Tibial artery (tissue), 4 donors: ENCODE measurements at regions of chr2 and their contacts with region 1.

Region 1: DNA sequence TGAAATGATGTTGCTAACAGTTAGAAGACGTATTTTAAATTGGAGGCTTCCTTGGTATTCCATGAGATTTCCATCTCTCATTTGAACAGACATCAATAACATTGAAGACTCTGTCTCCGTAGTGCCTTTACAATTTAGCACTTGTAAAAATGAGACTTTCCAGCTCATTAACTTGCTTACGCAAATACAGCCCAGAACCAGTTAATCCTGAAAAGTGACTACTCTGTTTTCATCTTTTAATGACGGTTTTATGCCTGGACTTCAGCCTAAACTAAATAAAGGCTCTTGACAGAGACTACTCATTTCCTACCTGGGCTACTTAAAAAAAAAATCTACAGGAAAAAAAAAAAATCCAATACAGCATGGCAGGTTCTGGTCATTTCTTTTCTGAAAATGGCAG is 148.6 kb downstream of the LRATD1 start:
- DNase-seq: no peak
- H3K4me3 ChIP-seq: no peak overlapping the region
- H3K27ac ChIP-seq: no peak overlapping the region
- H3K4me1 ChIP-seq: no peaks in the 10 kb centered on the region
- H3K27me3 ChIP-seq: no peaks in the 10 kb centered on the region
- CTCF ChIP-seq: no peak

Region 2: DNA sequence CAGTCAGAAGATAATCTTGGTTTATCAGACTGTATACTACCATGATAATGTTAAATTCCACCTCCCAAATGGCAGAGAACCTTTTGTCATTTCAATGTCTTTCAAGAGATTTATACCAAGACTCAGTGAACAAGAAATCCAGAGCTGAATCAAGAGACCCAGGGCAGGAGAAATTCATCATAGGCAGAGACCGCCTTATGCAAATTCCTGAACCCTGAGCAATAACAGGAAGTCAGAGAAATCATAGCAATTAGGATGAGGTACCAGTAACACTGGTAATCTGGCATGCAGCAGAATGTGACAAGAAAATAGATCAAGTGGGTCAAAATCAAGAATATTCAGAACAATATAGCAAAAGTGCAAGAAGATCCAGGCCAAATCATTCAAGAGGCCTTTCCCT is 561.0 kb before region 1 on chr2:
- intact Hi-C with region 1: loop called (anchors 5 kb)
- DNase-seq: no peak
- H3K4me3 ChIP-seq: no peak overlapping the region
- H3K27ac ChIP-seq: no peak overlapping the region
- H3K4me1 ChIP-seq: no peaks in the 10 kb centered on the region
- H3K27me3 ChIP-seq: no peaks in the 10 kb centered on the region
- CTCF ChIP-seq: no peak